Heart left ventricle (tissue), 16 donors: ENCODE measurements at regions of chr17 and their contacts with region 1.

Region 1: DNA sequence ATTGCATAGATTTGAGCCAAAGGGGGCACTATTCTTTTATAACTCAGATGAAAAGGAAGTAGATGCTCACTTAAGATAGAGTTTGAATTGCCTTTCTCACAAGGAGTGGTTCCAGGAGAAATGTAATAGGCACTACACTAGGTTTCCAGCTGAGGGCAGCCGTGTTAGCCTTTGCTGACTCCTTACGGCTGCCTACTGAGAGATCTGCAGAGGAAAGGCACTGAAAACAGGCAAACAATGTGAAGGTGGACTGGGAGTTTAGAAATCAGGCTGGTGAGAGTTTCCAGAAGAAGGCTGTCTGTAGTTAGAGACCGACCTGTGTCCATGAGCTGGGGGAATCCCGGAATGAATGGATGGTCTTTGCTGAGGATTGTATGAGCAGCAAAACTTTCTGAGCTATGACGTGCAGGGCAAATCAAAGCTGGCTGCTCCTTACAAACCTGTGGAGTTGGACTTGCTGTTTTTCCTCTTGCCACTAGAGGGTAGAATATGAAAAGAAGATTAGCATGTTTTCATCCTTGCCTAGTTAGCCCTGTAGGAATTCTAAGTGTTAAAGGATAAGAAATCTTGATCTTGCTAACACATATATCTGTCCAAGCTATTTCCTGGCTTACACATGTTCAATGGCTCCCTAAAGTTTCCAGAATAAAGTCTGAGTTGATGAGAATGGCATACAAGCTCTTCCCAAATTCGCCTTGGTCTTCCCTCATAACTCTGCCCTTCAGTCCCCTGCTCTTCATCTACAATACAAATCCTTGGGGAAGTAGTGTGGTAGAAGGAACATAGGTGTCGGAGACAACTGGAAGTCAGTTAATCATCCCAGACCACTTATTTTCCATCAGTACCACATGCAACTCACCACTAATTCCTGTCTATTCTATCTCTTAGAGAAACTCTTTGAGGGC is 20.1 kb upstream of the TAOK1 start:
- DNase-seq: peak in 4 of 5 donors; percentile 38 to 62 (median 54)
- ATAC-seq: peak; percentile 72 to 95 (median 94)
- H3K4me3 ChIP-seq: peak overlapping the region in 6 of 12 donors; percentile 19 to 41 (median 26)
- H3K27ac ChIP-seq: peak overlapping the region in 11 of 12 donors; percentile 14 to 78 (median 71)
- H3K4me1 ChIP-seq: peaks cover 0 to 20% (median 7%) of the 10 kb centered on the region in 12 donors
- H3K27me3 ChIP-seq: no peaks in the 10 kb centered on the region
- CTCF ChIP-seq: peak; percentile 64 to 88 (median 75)
- POLR2A ChIP-seq: no peak

Region 2: DNA sequence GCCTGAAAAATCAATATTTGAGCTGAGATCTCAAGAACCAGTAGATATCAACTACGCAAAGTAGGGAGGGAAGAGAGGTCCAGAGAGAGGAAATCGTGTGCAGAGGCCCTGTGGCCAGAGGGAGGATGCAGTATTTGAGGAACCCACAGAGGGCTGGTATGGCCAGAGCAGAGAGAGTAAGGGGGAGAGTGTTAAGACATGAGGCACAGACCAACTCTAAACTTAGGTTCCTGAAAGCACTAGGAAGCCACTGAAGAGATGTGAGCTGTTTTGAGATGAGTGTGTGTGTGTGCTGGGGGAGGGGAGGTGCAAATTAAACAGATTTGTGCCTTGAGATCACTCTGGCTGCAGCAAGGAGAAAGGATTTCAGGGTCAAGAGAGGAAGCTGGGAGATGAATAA is 885.8 kb before region 1 on chr17:
- intact Hi-C with region 1: no loop called
- DNase-seq: no peak
- ATAC-seq: no peak
- H3K4me3 ChIP-seq: no peak overlapping the region
- H3K27ac ChIP-seq: no peak overlapping the region
- H3K4me1 ChIP-seq: no peaks in the 10 kb centered on the region
- H3K27me3 ChIP-seq: peaks cover 0 to 7% (median 0%) of the 10 kb centered on the region in 9 donors
- CTCF ChIP-seq: no peak
- POLR2A ChIP-seq: no peak

Region 3: GRCh38 chr17:29347831-29348629 is 22.1 kb before region 1 on chr17:
- intact Hi-C with region 1: no loop called
- DNase-seq: no peak
- ATAC-seq: peak in 3 of 4 donors; percentile 32 to 49 (median 44)
- H3K4me3 ChIP-seq: peak overlapping the region in 1 of 12 donors; percentile 9
- H3K27ac ChIP-seq: no peak overlapping the region
- H3K4me1 ChIP-seq: no peaks in the 10 kb centered on the region
- H3K27me3 ChIP-seq: no peaks in the 10 kb centered on the region
- CTCF ChIP-seq: no peak
- POLR2A ChIP-seq: no peak

Region 4: GRCh38 chr17:29483503-29483902 is 113.4 kb after region 1 on chr17:
- intact Hi-C with region 1: no loop called
- DNase-seq: no peak
- ATAC-seq: no peak
- H3K4me3 ChIP-seq: no peak overlapping the region
- H3K27ac ChIP-seq: peak overlapping the region in 2 of 12 donors; percentile 6 to 9
- H3K4me1 ChIP-seq: peaks cover 0 to 5% (median 0%) of the 10 kb centered on the region in 12 donors
- H3K27me3 ChIP-seq: no peaks in the 10 kb centered on the region
- CTCF ChIP-seq: no peak
- POLR2A ChIP-seq: no peak

Region 5: GRCh38 chr17:29533976-29534375 is 163.9 kb after region 1 on chr17:
- intact Hi-C with region 1: loop called (anchors 1 to 5 kb)
- DNase-seq: no peak
- ATAC-seq: no peak
- H3K4me3 ChIP-seq: no peak overlapping the region
- H3K27ac ChIP-seq: no peak overlapping the region
- H3K4me1 ChIP-seq: no peaks in the 10 kb centered on the region
- H3K27me3 ChIP-seq: no peaks in the 10 kb centered on the region
- CTCF ChIP-seq: no peak
- POLR2A ChIP-seq: no peak